HEK293 (cell line): ENCODE measurements at regions of chr16 and their contacts with region 1.

Region 1: GRCh38 chr16:30445408-30446202 is at the start of gene SEPHS2:
- H3K4me3 ChIP-seq: peak within 1 kb of the TSS; percentile 79
- H3K27ac ChIP-seq: peak within 1 kb of the TSS; percentile 70
- H3K4me1 ChIP-seq: peaks cover 3% of the 10 kb centered on the region; the same call in 1 of the 2 replicates
- CTCF ChIP-seq: peak; percentile 93

Region 2: GRCh38 chr16:30417529-30418349 is 27.9 kb before region 1 on chr16:
- CTCF ChIA-PET with region 1: interaction called, 5 read pairs
- POLR2A ChIA-PET with region 1: interaction called, 10 read pairs
- H3K4me3 ChIP-seq: peak overlapping the region; percentile 37
- H3K27ac ChIP-seq: peak overlapping the region; percentile 85
- H3K4me1 ChIP-seq: peaks cover 12% of the 10 kb centered on the region
- CTCF ChIP-seq: peak; percentile 89

Region 3: DNA sequence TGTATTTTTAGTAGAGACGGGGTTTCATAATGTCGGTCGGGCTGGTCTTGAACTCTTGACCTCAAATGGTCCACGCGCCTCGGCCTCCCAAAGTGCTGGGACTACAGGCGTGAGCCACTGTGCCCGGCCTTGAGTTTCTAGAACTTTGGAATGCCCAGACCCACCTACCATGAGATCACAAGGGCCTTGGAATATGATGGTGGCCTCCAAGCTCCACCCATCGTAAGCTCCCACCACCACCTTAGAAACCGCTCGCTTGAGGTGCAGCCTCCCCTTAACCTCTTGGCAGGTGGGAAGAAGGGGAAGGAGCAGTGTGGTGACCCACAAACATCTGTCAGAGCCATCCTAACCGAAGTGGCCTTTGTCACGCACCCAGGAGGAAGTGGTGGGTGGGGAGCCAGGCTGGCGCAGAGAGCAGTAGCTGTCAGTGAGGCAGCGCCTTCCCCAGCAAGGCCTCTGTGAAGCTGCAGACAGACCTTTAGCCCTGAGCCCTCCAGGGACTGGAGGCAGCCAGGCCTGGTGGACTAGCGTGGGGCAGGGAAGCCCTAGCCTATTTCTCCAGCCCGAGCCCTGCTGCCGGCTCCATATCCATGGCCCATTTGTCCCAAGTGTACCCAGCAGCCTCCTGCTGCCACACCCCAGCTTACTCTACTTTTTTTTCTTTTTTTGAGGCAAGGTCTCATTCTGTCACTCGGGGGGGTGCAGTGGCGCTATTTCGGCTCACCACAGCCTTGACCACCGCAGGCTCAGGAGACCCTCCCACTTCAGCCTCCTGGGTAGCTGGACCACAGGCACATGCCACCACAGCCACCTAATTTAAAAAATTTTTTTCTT is 13.2 kb after region 1 on chr16:
- CTCF ChIA-PET with region 1: interaction called, 39 read pairs
- POLR2A ChIA-PET with region 1: no interaction called
- H3K4me3 ChIP-seq: no peak overlapping the region
- H3K27ac ChIP-seq: no peak overlapping the region
- H3K4me1 ChIP-seq: no peaks in the 10 kb centered on the region
- CTCF ChIP-seq: no peak

Region 4: GRCh38 chr16:30499284-30499683 is 53.7 kb after region 1 on chr16:
- CTCF ChIA-PET with region 1: interaction called, 12 read pairs
- POLR2A ChIA-PET with region 1: interaction called, 3 read pairs
- H3K4me3 ChIP-seq: no peak overlapping the region
- H3K27ac ChIP-seq: no peak overlapping the region
- H3K4me1 ChIP-seq: no peaks in the 10 kb centered on the region
- CTCF ChIP-seq: no peak

Region 5: DNA sequence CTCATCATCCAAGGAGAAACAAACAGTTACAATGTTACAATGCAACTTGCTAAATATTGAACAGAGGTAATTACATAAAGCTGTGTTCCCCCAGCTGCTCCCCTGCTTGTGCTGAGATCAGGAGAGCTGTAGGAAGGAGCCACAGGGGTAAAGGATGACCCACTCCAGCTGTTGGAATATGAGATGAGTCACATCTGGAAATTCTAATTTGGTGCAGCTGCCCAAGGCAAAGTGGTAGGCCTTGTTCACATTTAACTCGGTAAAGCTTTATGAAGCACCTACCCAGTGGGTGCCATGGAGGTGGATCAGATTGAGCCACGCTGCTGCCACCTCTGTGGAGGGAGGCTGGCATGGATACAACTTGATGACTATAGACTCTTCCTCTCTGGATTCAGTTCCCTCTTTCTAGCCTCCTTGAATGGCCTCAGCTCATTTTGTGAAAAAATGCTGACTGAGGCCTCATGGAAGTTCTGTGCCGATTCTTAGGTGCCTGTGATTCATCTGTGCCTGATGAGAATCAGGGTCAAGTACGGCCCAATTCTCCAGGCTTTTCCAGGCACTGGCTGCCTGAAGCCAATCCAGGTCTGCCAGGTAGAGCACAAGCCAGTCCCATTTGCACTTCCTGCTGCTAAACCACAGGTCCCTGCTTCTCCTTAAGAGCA is 157.1 kb after region 1 on chr16:
- CTCF ChIA-PET with region 1: interaction called, 36 read pairs
- POLR2A ChIA-PET with region 1: interaction called, 3 read pairs
- H3K4me3 ChIP-seq: no peak overlapping the region
- H3K27ac ChIP-seq: no peak overlapping the region
- H3K4me1 ChIP-seq: no peaks in the 10 kb centered on the region
- CTCF ChIP-seq: no peak

Region 6: DNA sequence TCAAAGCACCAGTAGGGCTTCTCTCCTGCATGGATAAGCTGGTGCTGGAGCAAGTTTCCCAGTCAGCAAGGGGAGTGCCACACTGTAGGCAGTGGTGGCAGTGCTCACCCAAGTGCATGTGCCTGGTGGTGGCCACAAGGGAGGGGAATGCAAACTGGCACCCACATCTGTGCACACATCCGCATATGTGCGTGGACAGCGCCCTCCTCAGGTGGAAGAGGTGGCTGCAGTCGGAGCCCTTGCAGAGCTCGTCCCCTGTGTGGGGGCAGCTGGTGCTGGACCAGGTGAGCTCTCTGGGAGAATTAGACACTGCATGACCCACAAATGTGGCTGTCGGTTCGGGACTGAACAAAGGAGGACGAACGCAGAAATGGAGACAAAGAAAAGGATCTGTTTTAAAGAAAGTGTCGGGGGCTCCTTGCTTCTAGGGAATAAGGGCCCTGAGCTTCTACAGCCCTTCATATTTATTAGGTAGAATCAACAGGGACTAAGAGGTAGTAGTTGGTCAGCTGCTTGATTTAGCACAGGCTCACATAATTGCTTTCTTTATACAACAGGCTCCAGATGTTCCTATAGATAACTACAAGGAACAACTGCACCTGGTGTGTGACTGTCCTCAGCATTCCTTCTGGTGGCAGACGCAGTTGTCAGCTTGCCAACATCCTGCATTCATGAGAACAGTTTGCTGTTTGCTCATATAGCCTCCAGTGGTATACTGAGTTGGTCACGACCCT is 169.9 kb after region 1 on chr16:
- CTCF ChIA-PET with region 1: interaction called, 15 read pairs
- POLR2A ChIA-PET with region 1: interaction called, 3 read pairs
- H3K4me3 ChIP-seq: no peak overlapping the region
- H3K27ac ChIP-seq: no peak overlapping the region
- H3K4me1 ChIP-seq: no peaks in the 10 kb centered on the region
- CTCF ChIP-seq: peak; percentile 95